T-cell (primary cell): ENCODE measurements at regions of chr2 and their contacts with region 1.

Region 1: GRCh38 chr2:19863303-19864041 is 38.3 kb downstream of the TTC32 start:
- DNase-seq: peak; percentile 10 to 79 (median 51)
- ATAC-seq: peak; percentile 77 to 86 (median 83)
- H3K4me3 ChIP-seq: no peak overlapping the region
- H3K4me3 Mint-ChIP-seq: no peak overlapping the region
- H3K27ac ChIP-seq: no peak overlapping the region
- H3K27ac Mint-ChIP-seq: no peak overlapping the region
- H3K4me1 ChIP-seq: peaks cover 5 to 12% of the 10 kb centered on the region in 2 experiments
- H3K4me1 Mint-ChIP-seq: peaks cover 10 to 12% (median 11%) of the 10 kb centered on the region in 3 donors
- H3K27me3 ChIP-seq: peaks cover 0 to 28% of the 10 kb centered on the region in 2 experiments
- H3K27me3 Mint-ChIP-seq: peaks cover 0 to 3% of the 10 kb centered on the region in 2 donors

Region 2: DNA sequence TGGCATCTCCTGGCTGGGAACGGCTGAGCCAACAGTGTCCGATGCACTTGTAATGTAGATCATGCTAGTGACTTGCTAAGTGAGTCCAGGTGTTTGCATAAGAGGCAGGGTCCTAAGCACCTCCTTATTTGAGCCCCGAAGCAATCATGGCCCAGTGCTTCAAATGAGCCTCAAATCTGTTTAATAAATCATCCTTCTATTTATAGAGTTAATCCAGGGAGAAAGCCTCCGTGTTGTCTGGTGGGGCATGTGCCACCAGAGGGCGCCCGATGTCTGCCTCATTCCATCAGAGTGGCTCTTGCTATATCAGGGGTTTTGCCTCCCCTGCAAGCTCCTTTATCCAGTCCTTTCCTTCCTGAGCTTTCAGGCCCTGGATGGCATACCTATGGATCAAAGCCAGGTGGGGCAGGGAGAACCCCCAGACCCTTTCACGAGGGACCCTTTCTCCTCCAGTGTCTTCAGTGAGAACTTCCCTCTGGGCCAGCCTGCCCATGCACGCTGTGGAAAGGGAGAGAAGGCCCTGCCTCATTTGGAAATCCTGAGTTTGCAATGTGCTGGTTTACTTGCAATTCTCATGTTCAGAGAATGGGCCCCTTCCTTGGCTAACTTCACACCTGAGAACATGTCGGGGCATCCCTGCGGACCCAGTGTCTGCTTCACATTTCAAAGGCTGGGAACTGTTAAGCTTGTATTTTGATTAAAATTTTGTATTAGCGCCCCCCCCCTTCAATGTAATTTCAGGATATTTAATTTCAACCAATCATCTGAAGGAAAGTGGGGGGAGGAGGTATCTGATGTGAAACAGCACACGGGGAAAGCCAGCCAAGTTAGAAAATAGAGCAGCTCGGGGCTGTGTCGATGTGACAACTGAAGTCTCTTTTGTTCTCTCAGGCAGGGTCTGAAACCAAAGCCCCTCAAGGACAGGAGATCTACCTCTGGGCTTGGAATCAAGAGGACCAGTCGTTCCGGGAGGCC is 1342.7 kb before region 1 on chr2:
- CTCF ChIA-PET with region 1: interaction called, 7 to 37 read pairs
- POLR2A ChIA-PET with region 1: no interaction called
- DNase-seq: peak; percentile 19 to 81 (median 66)
- ATAC-seq: peak; percentile 56 to 74 (median 72)
- H3K4me3 ChIP-seq: no peak overlapping the region
- H3K4me3 Mint-ChIP-seq: no peak overlapping the region
- H3K27ac ChIP-seq: no peak overlapping the region
- H3K27ac Mint-ChIP-seq: no peak overlapping the region
- H3K4me1 ChIP-seq: no peaks in the 10 kb centered on the region
- H3K4me1 Mint-ChIP-seq: no peaks in the 10 kb centered on the region
- H3K27me3 ChIP-seq: peaks cover 0 to 10% of the 10 kb centered on the region in 2 experiments
- H3K27me3 Mint-ChIP-seq: peaks cover 19 to 20% of the 10 kb centered on the region in 2 donors

Region 3: DNA sequence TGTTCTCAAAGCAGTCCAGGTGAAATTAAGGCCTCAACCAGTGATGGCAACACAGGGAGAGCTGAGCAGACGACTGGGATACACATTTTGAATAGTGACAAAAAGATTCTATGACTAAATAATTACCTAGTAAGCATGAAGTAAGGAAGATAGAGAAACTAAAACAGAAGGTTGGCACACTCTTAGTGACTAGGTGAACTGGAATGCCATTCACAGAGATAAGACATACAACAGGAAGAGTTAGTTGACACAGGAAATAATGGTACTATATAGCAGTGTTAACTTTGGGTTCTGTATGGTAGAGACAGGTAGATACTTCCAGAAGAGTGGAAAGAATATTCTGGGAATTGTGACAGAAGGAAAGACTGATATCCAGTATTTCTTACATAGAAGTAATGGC is 1092.3 kb before region 1 on chr2:
- CTCF ChIA-PET with region 1: no interaction called
- POLR2A ChIA-PET with region 1: no interaction called
- DNase-seq: no peak
- ATAC-seq: no peak
- H3K4me3 ChIP-seq: no peak overlapping the region
- H3K4me3 Mint-ChIP-seq: no peak overlapping the region
- H3K27ac ChIP-seq: no peak overlapping the region
- H3K27ac Mint-ChIP-seq: no peak overlapping the region
- H3K4me1 ChIP-seq: no peaks in the 10 kb centered on the region
- H3K4me1 Mint-ChIP-seq: no peaks in the 10 kb centered on the region
- H3K27me3 ChIP-seq: no peaks in the 10 kb centered on the region
- H3K27me3 Mint-ChIP-seq: no peaks in the 10 kb centered on the region

Region 4: GRCh38 chr2:20080839-20081415 is 217.5 kb after region 1 on chr2:
- CTCF ChIA-PET with region 1: no interaction called
- POLR2A ChIA-PET with region 1: no interaction called
- DNase-seq: no peak
- ATAC-seq: no peak
- H3K4me3 ChIP-seq: no peak overlapping the region
- H3K4me3 Mint-ChIP-seq: no peak overlapping the region
- H3K27ac ChIP-seq: no peak overlapping the region
- H3K27ac Mint-ChIP-seq: no peak overlapping the region
- H3K4me1 ChIP-seq: no peaks in the 10 kb centered on the region
- H3K4me1 Mint-ChIP-seq: no peaks in the 10 kb centered on the region
- H3K27me3 ChIP-seq: peaks cover 0 to 4% of the 10 kb centered on the region in 2 experiments
- H3K27me3 Mint-ChIP-seq: peaks cover 0 to 3% of the 10 kb centered on the region in 2 donors

Region 5: DNA sequence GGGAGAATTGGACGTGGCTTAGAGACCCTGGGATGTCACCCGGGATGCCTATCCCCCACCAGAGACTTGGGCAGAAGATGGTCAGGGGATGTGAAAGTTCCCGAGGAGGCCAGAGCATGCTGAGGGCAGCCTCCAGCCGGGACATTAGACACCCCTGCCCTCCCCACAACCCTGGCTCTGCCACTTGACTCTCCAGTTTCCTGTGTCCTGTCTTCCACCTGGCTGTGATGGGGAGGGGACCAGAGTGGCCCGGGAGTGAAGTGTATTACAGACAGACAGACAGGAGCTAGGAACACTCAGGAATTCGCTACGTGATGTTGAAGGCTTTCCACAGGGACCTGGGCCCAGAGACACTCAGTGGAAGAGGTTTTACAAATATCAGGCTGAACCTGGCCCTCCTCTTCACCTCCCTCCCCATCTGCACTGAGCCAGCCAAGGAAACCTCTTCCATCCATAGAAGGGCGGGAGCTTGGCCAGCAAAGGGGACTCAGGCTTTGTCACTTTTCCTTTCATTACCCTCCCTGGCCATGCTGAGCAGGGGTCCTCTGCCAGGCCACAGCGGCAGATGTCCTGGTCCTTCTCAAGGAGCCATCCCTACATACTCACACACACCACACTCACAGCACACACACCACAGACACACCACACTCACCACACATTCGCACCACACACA is 300.7 kb after region 1 on chr2:
- CTCF ChIA-PET with region 1: no interaction called
- POLR2A ChIA-PET with region 1: no interaction called
- DNase-seq: peak in 1 of 35 experiments; percentile 9
- ATAC-seq: peak in 1 of 4 experiments; percentile 7
- H3K4me3 ChIP-seq: no peak overlapping the region
- H3K4me3 Mint-ChIP-seq: no peak overlapping the region
- H3K27ac ChIP-seq: no peak overlapping the region
- H3K27ac Mint-ChIP-seq: no peak overlapping the region
- H3K4me1 ChIP-seq: no peaks in the 10 kb centered on the region
- H3K4me1 Mint-ChIP-seq: no peaks in the 10 kb centered on the region
- H3K27me3 ChIP-seq: peaks cover 0 to 37% of the 10 kb centered on the region in 2 experiments
- H3K27me3 Mint-ChIP-seq: peaks cover 1 to 12% of the 10 kb centered on the region in 2 donors